A549 (cell line): ENCODE measurements at regions of chr19 and their contacts with region 1.

Region 1: DNA sequence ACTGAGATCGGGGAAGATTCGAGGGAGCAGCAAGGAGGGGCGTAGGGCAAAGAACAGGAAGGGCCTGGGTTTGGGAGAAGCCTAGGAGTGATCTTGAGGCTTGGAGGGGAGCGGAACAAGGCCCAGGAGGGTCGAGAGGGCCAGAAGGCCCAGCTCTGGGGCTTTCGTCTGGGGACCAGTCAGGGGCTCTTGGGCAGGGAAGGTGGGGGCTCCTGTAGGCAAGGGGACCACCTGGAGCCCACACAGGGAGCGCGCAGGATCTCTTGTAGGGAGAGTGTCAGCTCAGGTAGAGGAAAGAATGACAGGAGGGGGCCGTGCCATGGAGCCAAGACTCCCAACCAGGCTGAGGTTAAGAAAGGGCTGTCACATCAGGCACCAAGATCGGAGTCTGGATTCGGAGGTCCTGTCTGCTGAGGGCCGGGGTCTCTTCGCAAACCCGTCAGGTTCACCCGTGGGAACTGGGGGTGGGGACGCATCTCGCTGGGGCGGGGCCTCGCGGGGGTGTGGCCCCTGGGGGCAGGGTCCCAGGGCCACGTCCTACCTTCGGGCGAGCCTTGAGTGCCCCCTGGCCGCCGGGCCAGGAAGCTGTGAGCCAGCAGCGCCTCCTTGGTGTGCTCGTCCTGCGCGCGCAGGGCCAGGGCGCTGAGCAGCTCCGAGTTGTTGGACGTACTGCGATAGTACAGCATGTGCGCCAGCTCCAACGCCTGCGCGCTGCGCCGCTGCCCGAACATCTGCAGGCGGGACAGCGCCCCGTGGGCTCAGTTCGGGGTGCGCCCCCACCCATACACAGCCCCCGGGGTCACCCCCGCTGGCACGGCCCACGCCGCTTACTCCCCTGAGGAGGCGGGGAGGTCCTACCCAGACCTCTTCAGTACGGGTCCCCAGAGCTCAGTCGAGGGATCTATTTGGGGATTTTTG is 8.4 kb downstream of the EMP3 start:
- DNase-seq: peak; percentile 98 to 99
- ATAC-seq: peak; percentile 90 to 93
- H3K4me3 ChIP-seq: peak overlapping the region; percentile 52
- H3K27ac ChIP-seq: peak overlapping the region; percentile 87 to 89
- H3K4me1 ChIP-seq: peaks cover 12% of the 10 kb centered on the region; the same call in 2 of the 3 replicates
- CTCF ChIP-seq: peak; percentile 96
- EP300 ChIP-seq: no peak
- POLR2A ChIP-seq: peak; percentile 76
- RAD21 ChIP-seq: peak; percentile 92 to 99

Region 2: GRCh38 chr19:48085904-48086864 is 247.5 kb before region 1 on chr19:
- CTCF ChIA-PET with region 1: no interaction called
- POLR2A ChIA-PET with region 1: no interaction called
- DNase-seq: no peak
- ATAC-seq: peak; percentile 58 to 75; a peak in 5 of 6 replicates
- H3K4me3 ChIP-seq: no peak overlapping the region
- H3K27ac ChIP-seq: no peak overlapping the region
- H3K4me1 ChIP-seq: no peaks in the 10 kb centered on the region
- CTCF ChIP-seq: no peak
- EP300 ChIP-seq: no peak
- POLR2A ChIP-seq: no peak
- RAD21 ChIP-seq: no peak

Region 3: DNA sequence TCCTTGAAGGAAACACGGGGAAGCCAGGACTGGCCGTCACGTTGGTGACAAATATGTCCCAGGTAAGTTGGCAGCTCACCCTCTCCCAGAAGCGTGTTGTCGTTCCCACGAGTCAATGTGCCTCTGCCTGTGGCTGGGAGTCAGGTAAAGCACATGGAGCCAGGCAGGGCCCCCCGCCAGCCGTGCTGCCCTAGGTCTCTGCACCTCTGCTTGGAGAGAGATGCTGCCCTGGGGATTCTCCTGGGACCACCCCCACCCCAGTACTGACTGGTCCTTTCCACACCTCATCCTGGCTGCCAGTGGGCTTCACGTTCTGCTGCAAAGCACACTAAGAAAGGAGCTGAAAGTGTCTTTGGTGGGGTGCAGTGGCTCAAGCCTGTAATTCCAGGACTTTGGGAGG is 54.0 kb before region 1 on chr19:
- CTCF ChIA-PET with region 1: interaction called, 16 read pairs
- POLR2A ChIA-PET with region 1: no interaction called
- DNase-seq: no peak
- ATAC-seq: no peak; a peak in 1 of 6 replicates
- H3K4me3 ChIP-seq: no peak overlapping the region
- H3K27ac ChIP-seq: no peak overlapping the region
- H3K4me1 ChIP-seq: no peaks in the 10 kb centered on the region
- CTCF ChIP-seq: no peak
- EP300 ChIP-seq: no peak
- POLR2A ChIP-seq: no peak
- RAD21 ChIP-seq: no peak

Region 4: GRCh38 chr19:48296963-48297734 is 36.6 kb before region 1 on chr19:
- CTCF ChIA-PET with region 1: interaction called, 18 read pairs
- POLR2A ChIA-PET with region 1: no interaction called
- DNase-seq: no peak
- ATAC-seq: peak; percentile 28 to 33; a peak in 3 of 6 replicates
- H3K4me3 ChIP-seq: no peak overlapping the region
- H3K27ac ChIP-seq: no peak overlapping the region
- H3K4me1 ChIP-seq: no peaks in the 10 kb centered on the region
- CTCF ChIP-seq: no peak
- EP300 ChIP-seq: no peak
- POLR2A ChIP-seq: no peak
- RAD21 ChIP-seq: no peak

Region 5: GRCh38 chr19:48321622-48322591 is 11.8 kb before region 1 on chr19:
- CTCF ChIA-PET with region 1: interaction called, 416 read pairs
- POLR2A ChIA-PET with region 1: interaction called, 94 read pairs
- DNase-seq: peak; percentile 94 to 99
- ATAC-seq: peak; percentile 67 to 74
- H3K4me3 ChIP-seq: peak overlapping the region; percentile 57
- H3K27ac ChIP-seq: peak overlapping the region; percentile 92 to 94
- H3K4me1 ChIP-seq: peaks cover 45% of the 10 kb centered on the region
- CTCF ChIP-seq: no peak
- EP300 ChIP-seq: no peak
- POLR2A ChIP-seq: peak; percentile 72
- RAD21 ChIP-seq: 0 out of 5 replicates have a peak, but pooled peaks of 1 of the 2 experiments have one; percentile 6

Region 6: GRCh38 chr19:48363810-48364563 is 30.3 kb after region 1 on chr19 and contains the starts of genes SYNGR4 and TMEM143:
- CTCF ChIA-PET with region 1: interaction called, 224 read pairs
- POLR2A ChIA-PET with region 1: interaction called, 36 read pairs
- DNase-seq: peak; percentile 100
- ATAC-seq: peak; percentile 75 to 89
- H3K4me3 ChIP-seq: peak within 1 kb of the TSS; percentile 51
- H3K27ac ChIP-seq: peak within 1 kb of the TSS; percentile 90 to 97
- H3K4me1 ChIP-seq: peaks cover 8% of the 10 kb centered on the region
- CTCF ChIP-seq: no peak
- EP300 ChIP-seq: no peak
- POLR2A ChIP-seq: peak; percentile 70
- RAD21 ChIP-seq: no peak
- polyA plus RNA-seq, gene SYNGR4: 2.3 and 2.9 TPM in 2 replicates
- polyA plus RNA-seq, gene TMEM143: 7.4 and 7.6 TPM in 2 replicates

Region 7: DNA sequence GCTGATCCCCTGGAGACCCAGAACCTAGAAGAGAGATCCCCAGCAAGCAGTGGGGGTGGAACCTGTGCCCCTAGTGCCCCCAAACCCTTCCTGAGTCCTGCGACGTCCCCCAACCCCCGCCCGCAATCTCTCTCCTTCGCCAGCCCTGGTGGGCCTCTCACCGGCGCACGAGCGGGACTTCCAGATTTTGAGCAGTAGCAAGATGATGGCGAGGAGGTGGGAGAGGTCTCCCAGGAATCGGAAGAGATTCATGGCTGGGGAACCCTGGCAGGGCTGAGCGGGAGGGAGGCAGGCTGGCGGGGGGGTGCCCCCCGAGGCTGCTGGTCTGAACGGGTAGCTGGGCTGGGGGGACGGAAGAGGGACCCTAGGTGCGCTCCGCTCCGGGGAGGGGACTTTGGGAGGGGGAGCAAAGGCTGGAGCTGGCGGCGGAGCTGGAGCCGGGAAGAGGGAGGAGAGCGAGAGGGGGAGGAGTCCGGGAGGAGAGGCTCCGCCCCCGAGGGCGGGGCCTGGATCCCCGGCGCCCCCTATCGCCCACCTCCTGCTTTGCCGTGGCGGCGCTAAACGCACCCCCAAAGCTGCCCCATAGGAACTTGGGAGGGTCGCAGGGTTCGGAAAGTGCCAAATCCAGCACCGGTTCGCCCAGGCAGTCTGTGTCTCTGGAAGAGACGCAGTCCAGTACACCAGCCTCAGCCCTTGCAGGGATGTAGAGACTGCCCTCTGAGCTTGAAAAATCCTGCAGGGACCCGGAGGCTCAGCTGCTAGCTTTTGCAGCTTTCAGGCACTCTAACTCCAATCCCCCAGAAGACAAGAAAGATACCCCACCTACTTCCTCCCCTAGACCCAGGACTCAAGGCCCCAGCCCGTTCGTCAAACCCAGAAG is 57.6 kb after region 1 on chr19 and contains the start of gene KDELR1:
- CTCF ChIA-PET with region 1: interaction called, 30 read pairs
- POLR2A ChIA-PET with region 1: interaction called, 12 read pairs
- DNase-seq: peak; percentile 77 to 78
- ATAC-seq: peak; percentile 54 to 72
- H3K4me3 ChIP-seq: peak within 1 kb of the TSS; percentile 97
- H3K27ac ChIP-seq: peak within 1 kb of the TSS; percentile 95 to 97
- H3K4me1 ChIP-seq: peaks cover 54% of the 10 kb centered on the region
- CTCF ChIP-seq: peak; percentile 90
- EP300 ChIP-seq: no peak
- POLR2A ChIP-seq: peak; percentile 72
- RAD21 ChIP-seq: peak; percentile 31 to 47; a peak in 4 of 5 replicates
- polyA plus RNA-seq, gene KDELR1: 200 and 270 TPM in 2 replicates

Region 8: DNA sequence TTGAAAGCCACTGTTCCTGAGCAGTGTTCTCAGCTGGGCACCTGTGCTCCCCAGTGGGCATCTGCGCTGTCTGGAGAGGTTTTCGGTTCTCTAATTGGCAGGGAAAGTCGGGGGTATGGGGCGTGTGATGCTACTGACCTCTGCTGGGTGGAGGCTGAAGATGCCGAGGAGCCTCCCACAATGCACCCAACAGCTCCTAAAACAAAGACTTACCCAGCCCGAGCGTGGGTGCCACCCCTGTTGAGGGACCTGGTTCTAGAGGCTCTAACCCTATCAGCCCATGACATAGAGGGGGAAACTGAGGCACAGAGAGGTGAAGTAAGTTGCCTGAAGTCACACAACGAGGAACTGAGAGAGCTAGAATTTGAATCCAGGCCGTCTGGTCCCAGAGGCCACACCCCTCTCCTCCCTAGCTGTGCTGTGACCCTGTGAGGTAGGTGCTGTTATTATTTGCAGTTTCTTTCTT is 275.1 kb after region 1 on chr19:
- CTCF ChIA-PET with region 1: interaction called, 13 read pairs
- POLR2A ChIA-PET with region 1: no interaction called
- DNase-seq: peak; percentile 83 to 88
- ATAC-seq: peak; percentile 75 to 82
- H3K4me3 ChIP-seq: no peak overlapping the region
- H3K27ac ChIP-seq: peak overlapping the region; percentile 65 to 78
- H3K4me1 ChIP-seq: peaks cover 5% of the 10 kb centered on the region; the same call in 1 of the 3 replicates
- CTCF ChIP-seq: peak; percentile 92
- EP300 ChIP-seq: no peak
- POLR2A ChIP-seq: no peak
- RAD21 ChIP-seq: peak; percentile 94 to 98